ENCODE measurements at regions of chr5 and their contacts with region 1.

Region 1: GRCh38 chr5:148730943-148731861 is 76.9 kb upstream of the HTR4 start:
- DNase-seq: peak; percentile 21 to 85 (median 64)
- ATAC-seq: peak; percentile 95
- H3K4me3 ChIP-seq: peak overlapping the region in 1 of 2 experiments; percentile 31
- H3K4me3 Mint-ChIP-seq: peak overlapping the region; percentile 67
- H3K27ac ChIP-seq: no peak overlapping the region
- H3K27ac Mint-ChIP-seq: no peak overlapping the region
- H3K4me1 ChIP-seq: no peaks in the 10 kb centered on the region
- H3K4me1 Mint-ChIP-seq: peaks cover 5% of the 10 kb centered on the region
- H3K27me3 ChIP-seq: no peaks in the 10 kb centered on the region
- H3K27me3 Mint-ChIP-seq: peaks cover 3% of the 10 kb centered on the region
- CTCF ChIP-seq: peak; percentile 99

Region 2: DNA sequence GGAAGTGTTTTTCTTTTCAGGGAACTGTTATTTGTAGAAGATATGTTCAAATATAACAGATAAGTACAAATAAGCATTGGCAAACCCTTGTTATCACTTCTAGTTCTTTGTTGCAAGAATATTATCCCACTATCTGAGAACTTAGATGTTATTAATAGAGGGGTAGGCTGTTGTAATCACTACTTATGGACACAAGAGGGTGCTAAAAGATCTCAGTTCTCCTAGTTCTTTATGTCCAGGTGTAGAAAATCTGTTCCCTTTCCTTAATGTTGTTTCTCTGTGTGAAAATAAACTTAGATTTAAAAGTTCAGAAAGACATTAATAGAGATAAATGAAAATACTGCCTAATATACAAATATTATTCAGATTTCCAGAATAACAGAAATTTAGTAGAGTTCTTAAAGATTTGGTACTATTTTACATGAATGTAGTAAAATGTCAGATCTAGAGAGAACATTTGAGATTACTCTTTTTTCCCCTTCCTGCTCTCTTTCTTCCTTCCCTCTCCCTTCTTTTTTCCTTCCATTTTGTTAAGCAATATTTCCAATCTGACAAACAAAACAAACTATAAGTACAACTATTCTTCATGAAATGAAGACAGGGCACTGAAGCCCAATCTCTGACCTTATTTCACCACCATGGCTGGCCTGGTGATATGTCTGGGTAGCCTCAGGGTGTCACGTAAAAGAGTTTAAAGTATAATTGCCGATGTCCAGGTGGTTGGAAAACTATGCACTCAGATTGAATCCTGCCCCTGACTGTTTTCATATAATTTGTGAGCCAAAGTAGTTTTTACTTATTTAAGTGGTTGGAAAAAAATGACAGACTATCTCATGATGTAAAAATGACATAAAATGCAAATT is 781.3 kb before region 1 on chr5:
- CTCF ChIA-PET with region 1: no interaction called
- POLR2A ChIA-PET with region 1: no interaction called
- intact Hi-C with region 1: loop called in 1 of 2 experiments (anchors 2 kb)
- DNase-seq: peak in 2 of 9 experiments; percentile 5
- ATAC-seq: no peak
- H3K4me3 ChIP-seq: no peak overlapping the region
- H3K4me3 Mint-ChIP-seq: no peak overlapping the region
- H3K27ac ChIP-seq: no peak overlapping the region
- H3K27ac Mint-ChIP-seq: no peak overlapping the region
- H3K4me1 ChIP-seq: no peaks in the 10 kb centered on the region
- H3K4me1 Mint-ChIP-seq: no peaks in the 10 kb centered on the region
- H3K27me3 ChIP-seq: no peaks in the 10 kb centered on the region
- H3K27me3 Mint-ChIP-seq: peaks cover 5% of the 10 kb centered on the region
- CTCF ChIP-seq: peak; percentile 47

Region 3: GRCh38 chr5:148443998-148444397 is 287.2 kb before region 1 on chr5:
- CTCF ChIA-PET with region 1: interaction called, 18 read pairs
- POLR2A ChIA-PET with region 1: no interaction called
- intact Hi-C with region 1: loop called in 1 of 2 experiments (anchors 1 kb)
- DNase-seq: peak in 7 of 9 experiments; percentile 12 to 65 (median 45)
- ATAC-seq: peak; percentile 77
- H3K4me3 ChIP-seq: no peak overlapping the region
- H3K4me3 Mint-ChIP-seq: no peak overlapping the region
- H3K27ac ChIP-seq: no peak overlapping the region
- H3K27ac Mint-ChIP-seq: no peak overlapping the region
- H3K4me1 ChIP-seq: no peaks in the 10 kb centered on the region
- H3K4me1 Mint-ChIP-seq: peaks cover 2% of the 10 kb centered on the region
- H3K27me3 ChIP-seq: no peaks in the 10 kb centered on the region
- H3K27me3 Mint-ChIP-seq: no peaks in the 10 kb centered on the region
- CTCF ChIP-seq: peak; percentile 87

Region 4: GRCh38 chr5:148957591-148958202 is 226.5 kb after region 1 on chr5:
- CTCF ChIA-PET with region 1: interaction called, 92 read pairs
- POLR2A ChIA-PET with region 1: no interaction called
- intact Hi-C with region 1: loop called (anchors 1 to 2 kb)
- DNase-seq: peak; percentile 15 to 69 (median 50)
- ATAC-seq: peak; percentile 58
- H3K4me3 ChIP-seq: no peak overlapping the region
- H3K4me3 Mint-ChIP-seq: no peak overlapping the region
- H3K27ac ChIP-seq: no peak overlapping the region
- H3K27ac Mint-ChIP-seq: no peak overlapping the region
- H3K4me1 ChIP-seq: no peaks in the 10 kb centered on the region
- H3K4me1 Mint-ChIP-seq: no peaks in the 10 kb centered on the region
- H3K27me3 ChIP-seq: no peaks in the 10 kb centered on the region
- H3K27me3 Mint-ChIP-seq: peaks cover 3% of the 10 kb centered on the region
- CTCF ChIP-seq: peak; percentile 90

Region 5: DNA sequence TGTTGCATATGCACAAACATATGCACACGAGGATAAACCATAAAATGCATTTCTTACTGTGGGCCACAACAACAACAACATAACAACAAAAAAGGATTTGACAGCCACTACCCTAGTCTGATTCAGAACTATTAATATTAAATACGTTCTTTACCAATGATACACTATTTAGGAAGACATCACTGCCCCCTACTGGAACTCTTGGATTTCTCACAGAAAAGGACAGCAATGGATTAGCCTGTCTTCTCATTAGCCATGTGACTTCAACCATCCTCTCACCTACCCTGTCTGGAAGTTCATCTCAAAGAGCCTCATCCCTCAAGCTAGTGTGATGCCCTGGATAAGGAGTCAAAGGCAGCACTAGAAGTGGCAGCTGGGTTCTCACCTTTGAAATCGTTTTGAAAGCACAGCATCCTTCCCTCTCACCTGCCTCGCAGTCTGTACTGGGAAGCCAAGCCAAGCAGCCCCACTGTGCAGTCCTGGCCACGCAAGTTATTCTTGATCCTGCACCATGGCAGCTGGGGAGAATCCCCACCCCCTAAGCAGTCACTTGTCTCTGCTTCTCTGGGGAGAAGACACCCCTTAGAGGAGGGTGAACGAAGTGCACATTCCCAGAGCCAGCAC is 267.1 kb after region 1 on chr5:
- CTCF ChIA-PET with region 1: interaction called, 94 read pairs
- POLR2A ChIA-PET with region 1: interaction called, 3 read pairs
- intact Hi-C with region 1: loop called (anchors 1 kb)
- DNase-seq: peak in 4 of 9 experiments; percentile 13 to 74 (median 52)
- ATAC-seq: peak; percentile 62
- H3K4me3 ChIP-seq: no peak overlapping the region
- H3K4me3 Mint-ChIP-seq: no peak overlapping the region
- H3K27ac ChIP-seq: no peak overlapping the region
- H3K27ac Mint-ChIP-seq: no peak overlapping the region
- H3K4me1 ChIP-seq: no peaks in the 10 kb centered on the region
- H3K4me1 Mint-ChIP-seq: peaks cover 2% of the 10 kb centered on the region
- H3K27me3 ChIP-seq: no peaks in the 10 kb centered on the region
- H3K27me3 Mint-ChIP-seq: peaks cover 23% of the 10 kb centered on the region
- CTCF ChIP-seq: peak; percentile 50

Region 6: DNA sequence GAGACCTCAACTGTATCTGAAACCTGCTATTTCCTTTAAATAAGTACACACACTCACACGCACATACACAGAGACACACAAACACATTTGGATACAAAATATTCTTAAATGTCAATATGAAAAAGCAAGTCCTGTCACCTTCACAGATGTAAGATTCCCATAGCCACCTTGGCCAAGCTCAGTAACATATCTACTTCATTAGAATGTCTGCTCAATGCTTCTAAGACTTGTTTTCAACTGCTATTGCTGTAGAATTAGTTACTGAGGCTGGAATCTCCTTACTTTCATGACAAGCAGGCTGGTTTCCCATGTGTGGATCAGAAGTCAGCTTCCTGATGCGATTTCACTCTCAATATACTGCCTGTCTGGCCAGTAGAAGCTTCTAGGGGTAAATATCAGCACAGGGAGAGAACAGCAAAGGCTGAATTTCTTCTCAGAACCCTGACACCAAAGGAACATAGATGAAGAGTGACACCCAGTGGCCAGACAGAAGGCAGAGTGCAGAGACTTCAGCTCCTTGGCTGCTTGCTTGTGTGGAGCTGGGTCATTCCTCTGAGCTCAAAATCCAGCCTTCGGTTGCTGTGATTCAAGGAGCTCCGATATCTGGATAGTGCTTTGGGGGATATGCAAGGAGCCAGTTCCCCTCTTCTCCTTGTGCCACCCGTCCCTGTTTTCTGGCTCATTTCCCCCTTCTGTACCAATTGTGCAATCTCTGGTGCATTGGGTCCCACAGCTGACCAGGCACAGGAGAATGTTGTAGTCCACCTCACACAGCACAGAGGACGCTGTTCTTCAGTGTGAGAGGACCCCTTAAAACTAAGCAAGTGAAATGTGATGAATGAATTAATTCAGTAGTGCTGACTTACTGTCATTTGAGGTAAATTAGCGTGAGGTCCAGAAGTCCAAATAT is 383.5 kb after region 1 on chr5:
- CTCF ChIA-PET with region 1: interaction called, 26 read pairs
- POLR2A ChIA-PET with region 1: no interaction called
- intact Hi-C with region 1: loop called (anchors 1 to 2 kb)
- DNase-seq: peak in 8 of 9 experiments; percentile 8 to 58 (median 38)
- ATAC-seq: no peak
- H3K4me3 ChIP-seq: no peak overlapping the region
- H3K4me3 Mint-ChIP-seq: no peak overlapping the region
- H3K27ac ChIP-seq: no peak overlapping the region
- H3K27ac Mint-ChIP-seq: no peak overlapping the region
- H3K4me1 ChIP-seq: no peaks in the 10 kb centered on the region
- H3K4me1 Mint-ChIP-seq: no peaks in the 10 kb centered on the region
- H3K27me3 ChIP-seq: peaks cover 0 to 9% of the 10 kb centered on the region in 2 experiments
- H3K27me3 Mint-ChIP-seq: peaks cover 20% of the 10 kb centered on the region
- CTCF ChIP-seq: no peak

Measured in CD8-positive, alpha-beta T cell (primary cell).